CD14-positive monocyte (primary cell): ENCODE measurements at regions of chr16 and their contacts with region 1.

Region 1: GRCh38 chr16:67672739-67673662 is 6.4 kb downstream of the C16orf86 start:
- DNase-seq: peak; percentile 54 to 72 (median 70)
- H3K4me3 ChIP-seq: peak overlapping the region in 1 of 3 experiments; percentile 49
- H3K4me3 Mint-ChIP-seq: no peak overlapping the region
- H3K27ac ChIP-seq: peak overlapping the region; percentile 41 to 86
- H3K27ac Mint-ChIP-seq: peak overlapping the region; percentile 80 to 93 (median 89)
- H3K4me1 ChIP-seq: peaks cover 31 to 33% of the 10 kb centered on the region in 2 donors
- H3K4me1 Mint-ChIP-seq: peaks cover 41% of the 10 kb centered on the region
- H3K27me3 ChIP-seq: no peaks in the 10 kb centered on the region
- H3K27me3 Mint-ChIP-seq: peaks cover 0 to 4% (median 2%) of the 10 kb centered on the region in 3 donors
- CTCF ChIP-seq: peak; percentile 86

Region 2: DNA sequence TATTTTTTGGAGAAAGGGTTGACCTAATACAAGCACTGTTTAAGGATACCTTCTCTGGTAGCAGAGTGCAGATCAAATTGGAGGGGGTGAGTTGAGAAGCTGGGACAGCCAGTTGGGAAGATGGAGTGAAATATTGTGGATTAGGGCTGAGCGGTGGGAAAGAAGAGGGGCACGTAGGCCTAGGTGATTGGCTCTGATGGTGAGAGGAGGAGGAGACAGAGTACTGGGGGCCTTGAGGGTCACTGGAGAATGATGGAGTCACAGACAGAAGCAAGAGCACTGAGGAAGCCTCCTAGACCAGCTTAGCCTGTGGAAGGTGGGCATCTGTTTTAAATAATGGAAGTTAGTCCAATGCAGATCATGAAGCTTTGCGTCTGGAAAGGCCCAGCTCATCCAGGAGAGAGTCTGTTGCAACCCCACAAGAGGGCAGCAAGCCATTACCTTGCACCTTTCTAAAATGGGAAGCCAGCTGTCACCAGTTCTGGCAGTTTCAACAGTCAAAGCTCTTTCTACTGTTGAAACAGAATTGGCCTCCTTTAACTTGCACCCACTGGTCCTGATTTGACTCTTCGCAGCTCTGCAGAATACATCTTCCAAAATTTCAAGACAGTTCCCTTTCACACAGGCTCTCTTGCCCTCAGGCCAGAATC is 412.4 kb before region 1 on chr16:
- intact Hi-C with region 1: no loop called
- DNase-seq: peak in 1 of 3 donors; percentile 28
- H3K4me3 ChIP-seq: no peak overlapping the region
- H3K4me3 Mint-ChIP-seq: no peak overlapping the region
- H3K27ac ChIP-seq: no peak overlapping the region
- H3K27ac Mint-ChIP-seq: no peak overlapping the region
- H3K4me1 ChIP-seq: no peaks in the 10 kb centered on the region
- H3K4me1 Mint-ChIP-seq: peaks cover 2% of the 10 kb centered on the region
- H3K27me3 ChIP-seq: no peaks in the 10 kb centered on the region
- H3K27me3 Mint-ChIP-seq: peaks cover 5 to 17% (median 6%) of the 10 kb centered on the region in 3 donors
- CTCF ChIP-seq: peak; percentile 34

Region 3: DNA sequence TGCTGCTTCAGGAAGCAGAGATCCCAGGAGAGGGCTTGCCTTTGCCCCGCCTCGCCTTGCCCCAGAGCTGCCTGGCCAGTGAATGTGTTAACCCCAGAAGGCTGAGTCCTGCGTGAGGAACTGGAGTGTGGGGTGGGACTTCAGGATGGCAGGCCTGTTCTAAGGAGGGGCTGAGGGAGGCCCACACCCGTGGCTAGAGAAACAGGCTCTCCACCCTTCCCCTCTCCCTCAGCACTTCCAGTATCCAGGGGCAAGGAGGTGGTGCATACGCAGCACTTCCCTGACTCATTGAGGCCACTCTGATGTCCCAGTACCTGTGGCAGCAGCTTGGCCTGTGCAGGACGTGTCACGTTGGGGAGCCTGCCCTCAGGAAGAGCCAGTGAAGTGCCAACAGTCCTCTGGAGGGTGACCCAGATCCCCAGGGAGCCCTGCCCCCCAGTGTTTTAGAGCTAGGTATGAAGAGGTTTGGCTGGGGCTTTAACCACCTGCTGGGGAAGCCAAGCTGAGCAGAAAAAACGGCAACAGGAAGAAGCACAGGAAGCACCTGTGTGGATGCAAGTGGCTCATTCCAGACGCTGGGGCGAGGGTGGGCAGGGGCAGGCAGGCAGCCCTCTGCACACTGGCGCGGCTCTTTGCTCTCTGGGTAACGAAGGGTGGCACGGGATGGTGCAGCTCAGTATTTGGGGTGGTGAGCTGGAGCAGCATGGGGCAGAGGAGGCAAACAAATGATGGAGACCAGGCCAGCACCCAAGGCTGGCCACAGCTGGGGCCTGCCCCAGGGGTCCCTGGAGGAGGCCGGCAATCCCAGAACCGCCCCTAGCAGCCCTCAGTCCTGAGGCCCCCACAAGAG is 125.4 kb before region 1 on chr16:
- intact Hi-C with region 1: no loop called
- DNase-seq: no peak
- H3K4me3 ChIP-seq: no peak overlapping the region
- H3K4me3 Mint-ChIP-seq: no peak overlapping the region
- H3K27ac ChIP-seq: peak overlapping the region; percentile 12 to 45
- H3K27ac Mint-ChIP-seq: peak overlapping the region in 4 of 7 donors; percentile 30 to 66 (median 54)
- H3K4me1 ChIP-seq: peaks cover 27 to 34% of the 10 kb centered on the region in 2 donors
- H3K4me1 Mint-ChIP-seq: peaks cover 38% of the 10 kb centered on the region
- H3K27me3 ChIP-seq: no peaks in the 10 kb centered on the region
- H3K27me3 Mint-ChIP-seq: peaks cover 0 to 3% (median 0%) of the 10 kb centered on the region in 3 donors
- CTCF ChIP-seq: no peak

Region 4: DNA sequence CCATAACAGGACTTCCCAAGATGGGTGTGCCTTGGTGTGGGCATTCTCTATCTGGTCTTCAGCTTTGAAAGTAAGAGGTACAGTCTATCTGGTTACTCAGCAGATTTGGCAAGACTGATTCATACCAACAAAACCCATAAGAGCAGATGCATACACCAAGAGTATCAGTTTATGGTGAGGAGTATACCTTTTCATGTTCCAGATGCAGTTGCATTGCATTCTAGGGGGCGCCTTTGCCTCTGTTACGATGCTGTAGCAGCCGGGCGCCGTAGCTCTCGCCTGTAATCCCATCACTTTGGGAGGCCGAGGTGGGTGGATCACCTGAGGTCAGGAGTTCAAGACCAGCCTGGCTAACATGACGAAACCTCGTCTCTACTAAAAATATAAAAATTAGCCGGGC is 59.2 kb before region 1 on chr16:
- intact Hi-C with region 1: no loop called
- DNase-seq: no peak
- H3K4me3 ChIP-seq: no peak overlapping the region
- H3K4me3 Mint-ChIP-seq: no peak overlapping the region
- H3K27ac ChIP-seq: no peak overlapping the region
- H3K27ac Mint-ChIP-seq: no peak overlapping the region
- H3K4me1 ChIP-seq: no peaks in the 10 kb centered on the region
- H3K4me1 Mint-ChIP-seq: no peaks in the 10 kb centered on the region
- H3K27me3 ChIP-seq: no peaks in the 10 kb centered on the region
- H3K27me3 Mint-ChIP-seq: no peaks in the 10 kb centered on the region
- CTCF ChIP-seq: no peak

Region 5: DNA sequence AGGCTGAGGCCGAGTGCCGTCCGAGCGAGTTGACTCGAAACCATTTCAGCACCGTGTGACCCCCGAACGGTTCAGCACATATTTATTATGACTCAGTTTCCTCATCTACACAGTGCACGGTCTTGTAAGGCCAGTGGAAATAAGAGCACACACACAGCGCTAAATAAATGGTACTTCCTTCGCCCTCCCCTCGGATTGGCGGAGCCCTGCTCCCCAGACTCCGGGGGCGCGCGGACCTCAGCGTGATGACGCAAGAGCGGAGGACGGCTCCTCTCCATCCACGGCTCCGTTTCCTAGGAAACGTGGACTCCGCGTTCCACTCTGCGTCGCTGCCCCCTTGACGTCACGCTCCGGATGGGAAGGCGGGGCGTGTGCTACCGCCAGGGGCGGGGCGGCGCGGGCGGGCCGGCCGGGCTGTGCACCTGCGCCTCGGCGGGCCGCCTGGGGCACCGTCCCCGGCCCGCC is 12.4 kb before region 1 on chr16 and contains the start of gene PARD6A:
- intact Hi-C with region 1: no loop called
- DNase-seq: peak; percentile 95 to 96 (median 96)
- H3K4me3 ChIP-seq: peak within 1 kb of the TSS; percentile 74 to 92 (median 92)
- H3K4me3 Mint-ChIP-seq: peak within 1 kb of the TSS; percentile 90 to 92
- H3K27ac ChIP-seq: peak within 1 kb of the TSS; percentile 87 to 94
- H3K27ac Mint-ChIP-seq: peak within 1 kb of the TSS; percentile 96 to 99 (median 98)
- H3K4me1 ChIP-seq: peaks cover 20 to 30% of the 10 kb centered on the region in 2 donors
- H3K4me1 Mint-ChIP-seq: peaks cover 21% of the 10 kb centered on the region
- H3K27me3 ChIP-seq: peaks cover 0 to 5% of the 10 kb centered on the region in 2 donors
- H3K27me3 Mint-ChIP-seq: peaks cover 8 to 11% (median 10%) of the 10 kb centered on the region in 3 donors
- CTCF ChIP-seq: no peak
- polyA plus RNA-seq, gene PARD6A: 2.7 to 6.9 (median 6.1) TPM

Region 6: DNA sequence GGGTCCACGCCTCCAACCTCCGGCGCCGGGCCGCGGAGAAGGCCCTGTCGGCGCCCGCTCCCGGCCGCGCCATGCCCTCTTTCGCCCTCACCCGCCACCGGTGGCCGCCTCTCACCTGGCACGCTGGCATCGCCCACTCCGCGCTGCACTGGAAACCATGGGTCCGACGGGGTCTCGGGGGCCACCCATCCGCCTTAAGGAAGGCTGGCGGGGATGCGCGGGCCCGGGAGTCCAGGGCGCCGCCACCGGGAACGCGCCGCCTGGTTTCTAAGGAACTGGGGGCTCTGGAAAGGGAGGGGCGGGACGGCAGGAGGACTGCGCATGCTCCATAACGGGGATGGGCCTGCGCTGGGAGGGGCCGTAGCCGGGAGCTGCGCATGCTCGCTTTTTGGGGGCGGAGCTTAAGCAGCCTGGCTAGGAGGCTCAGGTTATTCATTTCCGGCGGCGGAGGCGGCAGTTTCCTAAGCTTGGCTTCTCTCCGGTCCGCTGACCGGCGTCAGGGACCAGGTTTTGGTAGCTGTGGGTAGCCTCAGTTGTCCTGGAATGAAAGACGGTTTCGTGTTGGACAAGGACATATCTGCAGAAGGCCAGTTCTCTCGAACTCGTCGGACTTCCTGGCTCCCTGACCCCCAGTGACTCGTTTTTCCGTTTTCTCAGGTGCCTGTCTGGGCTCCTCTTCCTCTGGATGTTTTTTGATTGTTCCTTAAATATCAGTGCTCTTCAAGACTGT is 46.2 kb after region 1 on chr16 and contains the start of gene GFOD2:
- intact Hi-C with region 1: loop called (anchors 5 kb)
- DNase-seq: peak; percentile 94 to 96 (median 94)
- H3K4me3 ChIP-seq: peak within 1 kb of the TSS; percentile 65 to 98 (median 79)
- H3K4me3 Mint-ChIP-seq: peak within 1 kb of the TSS; percentile 93 to 96
- H3K27ac ChIP-seq: peak within 1 kb of the TSS; percentile 77 to 96
- H3K27ac Mint-ChIP-seq: peak within 1 kb of the TSS; percentile 91 to 97 (median 94)
- H3K4me1 ChIP-seq: peaks cover 17 to 29% of the 10 kb centered on the region in 2 donors
- H3K4me1 Mint-ChIP-seq: peaks cover 33% of the 10 kb centered on the region
- H3K27me3 ChIP-seq: no peaks in the 10 kb centered on the region
- H3K27me3 Mint-ChIP-seq: peaks cover 0 to 2% (median 0%) of the 10 kb centered on the region in 3 donors
- CTCF ChIP-seq: no peak
- polyA plus RNA-seq, gene GFOD2: 3.7 to 9.4 (median 3.8) TPM

Region 7: GRCh38 chr16:67928561-67929364 is 255.8 kb after region 1 on chr16:
- intact Hi-C with region 1: loop called (anchors 2 to 5 kb)
- DNase-seq: peak; percentile 30 to 51 (median 36)
- H3K4me3 ChIP-seq: no peak overlapping the region
- H3K4me3 Mint-ChIP-seq: no peak overlapping the region
- H3K27ac ChIP-seq: no peak overlapping the region
- H3K27ac Mint-ChIP-seq: peak overlapping the region in 3 of 7 donors; percentile 7 to 23 (median 20)
- H3K4me1 ChIP-seq: no peaks in the 10 kb centered on the region
- H3K4me1 Mint-ChIP-seq: no peaks in the 10 kb centered on the region
- H3K27me3 ChIP-seq: no peaks in the 10 kb centered on the region
- H3K27me3 Mint-ChIP-seq: peaks cover 0 to 2% (median 0%) of the 10 kb centered on the region in 3 donors
- CTCF ChIP-seq: peak; percentile 92

Region 8: GRCh38 chr16:68229431-68230198 is 556.6 kb after region 1 on chr16:
- intact Hi-C with region 1: loop called in 1 of 2 experiments (anchors 10 kb)
- DNase-seq: peak in 2 of 3 donors; percentile 25 to 31
- H3K4me3 ChIP-seq: no peak overlapping the region
- H3K4me3 Mint-ChIP-seq: no peak overlapping the region
- H3K27ac ChIP-seq: no peak overlapping the region
- H3K27ac Mint-ChIP-seq: peak overlapping the region in 1 of 7 donors; percentile 66
- H3K4me1 ChIP-seq: peaks cover 0 to 10% of the 10 kb centered on the region in 2 donors
- H3K4me1 Mint-ChIP-seq: peaks cover 9% of the 10 kb centered on the region
- H3K27me3 ChIP-seq: peaks cover 0 to 9% of the 10 kb centered on the region in 2 donors
- H3K27me3 Mint-ChIP-seq: peaks cover 4 to 8% (median 5%) of the 10 kb centered on the region in 3 donors
- CTCF ChIP-seq: peak; percentile 86